Adrenal gland (tissue), 19 donors: ENCODE measurements at regions of chr5 and their contacts with region 1.

Region 1: GRCh38 chr5:141475625-141476131 is at the start of gene PCDHGC3:
- DNase-seq: peak; percentile 90 to 98 (median 95)
- H3K4me3 ChIP-seq: peak within 1 kb of the TSS; percentile 45 to 88 (median 64)
- H3K27ac ChIP-seq: peak within 1 kb of the TSS; percentile 71 to 94 (median 82)
- H3K4me1 ChIP-seq: peaks cover 5 to 42% of the 10 kb centered on the region in 2 donors
- H3K27me3 ChIP-seq: no peaks in the 10 kb centered on the region
- CTCF ChIP-seq: peak in 5 of 6 experiments; percentile 26 to 46 (median 38)
- POLR2A ChIP-seq: peak; percentile 28 to 89
- total RNA-seq, gene PCDHGC3: 8.7 to 103 (median 76.5) TPM

Region 2: DNA sequence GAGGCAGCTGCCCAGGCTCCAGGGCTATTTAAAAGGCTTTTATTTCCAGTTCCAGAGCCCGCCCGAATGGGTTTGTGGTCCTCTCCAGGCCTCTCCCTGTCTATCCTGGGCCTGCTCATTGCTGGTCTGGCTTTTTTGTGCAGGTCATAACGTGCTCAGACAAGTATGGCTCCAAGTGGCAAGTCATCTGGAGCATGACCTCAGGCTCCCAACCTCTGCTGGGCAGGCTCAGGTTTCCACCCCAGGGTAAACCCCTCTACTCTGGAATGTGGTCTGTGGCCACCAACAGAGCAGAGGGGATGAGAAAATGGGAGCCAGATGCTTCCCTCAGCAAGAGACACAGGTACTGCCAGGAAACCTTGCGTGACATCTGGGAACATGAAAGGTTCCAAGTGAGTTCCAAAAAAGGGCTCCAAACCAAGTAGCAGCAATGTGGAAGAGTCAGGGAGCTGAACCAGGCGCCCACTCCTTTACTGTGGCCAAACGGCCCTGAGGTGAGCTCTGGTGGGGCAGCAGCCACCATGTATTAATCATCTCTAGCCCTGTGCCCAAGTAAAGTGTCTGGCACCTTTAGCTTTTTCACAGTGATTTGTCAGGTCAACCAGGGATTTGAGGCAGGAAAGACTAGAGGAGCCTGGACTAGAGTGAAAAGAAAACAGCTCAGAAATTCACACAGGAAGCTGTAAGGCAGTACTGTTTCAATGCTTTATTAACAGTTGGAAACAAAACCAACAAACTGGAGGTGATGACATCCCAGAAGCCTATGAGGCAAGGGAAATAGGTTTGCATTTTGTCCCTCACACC is 38.9 kb after region 1 on chr5:
- intact Hi-C with region 1: loop called (anchors 5 kb)
- DNase-seq: peak in 1 of 7 donors; percentile 31
- H3K4me3 ChIP-seq: peak overlapping the region in 1 of 4 donors; percentile 54
- H3K27ac ChIP-seq: peak overlapping the region; percentile 88 to 99 (median 93)
- H3K4me1 ChIP-seq: peaks cover 16 to 33% of the 10 kb centered on the region in 2 donors
- H3K27me3 ChIP-seq: no peaks in the 10 kb centered on the region
- CTCF ChIP-seq: peak in 1 of 6 experiments; percentile 3
- POLR2A ChIP-seq: no peak

Region 3: GRCh38 chr5:141557681-141558136 is 82.0 kb after region 1 on chr5:
- intact Hi-C with region 1: no loop called
- DNase-seq: peak; percentile 83 to 97 (median 94)
- H3K4me3 ChIP-seq: peak overlapping the region in 1 of 4 donors; percentile 41
- H3K27ac ChIP-seq: peak overlapping the region; percentile 39 to 92 (median 65)
- H3K4me1 ChIP-seq: peaks cover 5 to 34% of the 10 kb centered on the region in 2 donors
- H3K27me3 ChIP-seq: no peaks in the 10 kb centered on the region
- CTCF ChIP-seq: peak; percentile 90 to 97 (median 93)
- POLR2A ChIP-seq: peak in 1 of 2 donors; percentile 27